ENCODE measurements at regions of chr19 and their contacts with region 1.

Region 1: GRCh38 chr19:9075064-9075949 is 11.6 kb upstream of the OR1M1 start:
- DNase-seq: peak; percentile 98
- H3K4me3 ChIP-seq: no peak overlapping the region
- H3K27ac ChIP-seq: peak overlapping the region; percentile 24
- H3K4me1 ChIP-seq: peaks cover 9% of the 10 kb centered on the region
- H3K27me3 ChIP-seq: no peaks in the 10 kb centered on the region
- CTCF ChIP-seq: no peak

Region 2: DNA sequence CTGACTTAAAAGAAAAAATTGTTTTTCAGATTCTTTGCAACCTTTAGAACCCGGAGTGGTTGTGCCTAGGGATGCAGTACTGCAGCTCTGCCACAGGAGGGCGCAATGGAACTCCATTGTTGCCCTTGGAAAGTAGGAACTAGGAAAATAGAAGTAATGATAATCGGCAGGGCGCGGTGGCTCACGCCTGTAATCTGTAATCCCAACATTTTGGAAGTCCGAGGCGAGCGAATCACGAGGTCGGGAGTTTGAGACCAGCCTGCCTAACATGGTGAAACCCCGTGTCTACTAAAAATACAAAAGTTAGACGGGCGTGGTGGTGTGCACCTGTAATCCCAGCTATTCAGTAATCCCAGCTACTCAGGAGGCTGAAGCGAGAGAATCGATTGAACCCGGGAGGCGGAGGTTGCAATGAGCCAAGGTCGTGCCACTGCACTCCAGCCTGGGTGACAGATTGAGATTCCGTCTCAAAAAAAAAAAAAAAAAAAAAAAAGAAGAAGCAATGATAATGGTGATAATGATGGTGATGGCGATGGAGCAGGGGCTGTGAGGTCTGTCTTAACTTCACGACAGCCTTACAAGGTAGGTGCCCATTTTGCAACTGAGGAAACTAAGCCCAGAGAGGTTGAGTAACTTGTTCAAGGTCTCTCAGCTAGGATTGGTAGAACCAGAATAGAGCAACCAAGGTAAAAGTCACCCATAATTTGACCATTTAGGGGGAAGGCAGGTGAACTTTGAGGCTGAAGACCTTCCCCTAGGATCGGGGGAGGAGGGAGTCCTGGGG is 459.3 kb before region 1 on chr19:
- CTCF ChIA-PET with region 1: no interaction called
- dilution Hi-C with region 1: no loop called
- in situ Hi-C with region 1: no loop called
- intact Hi-C with region 1: loop called (anchors 1 kb)
- DNase-seq: no peak
- H3K4me3 ChIP-seq: no peak overlapping the region
- H3K27ac ChIP-seq: no peak overlapping the region
- H3K4me1 ChIP-seq: no peaks in the 10 kb centered on the region
- H3K27me3 ChIP-seq: no peaks in the 10 kb centered on the region
- CTCF ChIP-seq: peak; percentile 61 to 72

Region 3: GRCh38 chr19:8832132-8833021 is 242.9 kb before region 1 on chr19 and contains the starts of genes MBD3L1 and ZNF558:
- CTCF ChIA-PET with region 1: no interaction called
- dilution Hi-C with region 1: no loop called
- in situ Hi-C with region 1: no loop called
- intact Hi-C with region 1: loop called (anchors 5 kb)
- DNase-seq: peak; percentile 95
- H3K4me3 ChIP-seq: peak within 1 kb of the TSS; percentile 48 to 64 (median 51)
- H3K27ac ChIP-seq: no peak within 1 kb of the TSS
- H3K4me1 ChIP-seq: no peaks in the 10 kb centered on the region
- H3K27me3 ChIP-seq: no peaks in the 10 kb centered on the region
- CTCF ChIP-seq: no peak
- total RNA-seq, gene MBD3L1: not detected
- total RNA-seq, gene ZNF558: 21.2 to 38.3 TPM

Region 4: GRCh38 chr19:9219489-9219888 is 144.2 kb after region 1 on chr19 and contains the start of gene OR7D4:
- CTCF ChIA-PET with region 1: no interaction called
- dilution Hi-C with region 1: no loop called
- in situ Hi-C with region 1: no loop called
- intact Hi-C with region 1: no loop called
- DNase-seq: no peak
- H3K4me3 ChIP-seq: no peak within 1 kb of the TSS
- H3K27ac ChIP-seq: no peak within 1 kb of the TSS
- H3K4me1 ChIP-seq: no peaks in the 10 kb centered on the region
- H3K27me3 ChIP-seq: no peaks in the 10 kb centered on the region
- CTCF ChIP-seq: no peak
- total RNA-seq, gene OR7D4: not detected

Measured in mammary epithelial cell (primary cell).